Calu3 (cell line): ENCODE measurements at regions of chr20 and their contacts with region 1.

Region 1: DNA sequence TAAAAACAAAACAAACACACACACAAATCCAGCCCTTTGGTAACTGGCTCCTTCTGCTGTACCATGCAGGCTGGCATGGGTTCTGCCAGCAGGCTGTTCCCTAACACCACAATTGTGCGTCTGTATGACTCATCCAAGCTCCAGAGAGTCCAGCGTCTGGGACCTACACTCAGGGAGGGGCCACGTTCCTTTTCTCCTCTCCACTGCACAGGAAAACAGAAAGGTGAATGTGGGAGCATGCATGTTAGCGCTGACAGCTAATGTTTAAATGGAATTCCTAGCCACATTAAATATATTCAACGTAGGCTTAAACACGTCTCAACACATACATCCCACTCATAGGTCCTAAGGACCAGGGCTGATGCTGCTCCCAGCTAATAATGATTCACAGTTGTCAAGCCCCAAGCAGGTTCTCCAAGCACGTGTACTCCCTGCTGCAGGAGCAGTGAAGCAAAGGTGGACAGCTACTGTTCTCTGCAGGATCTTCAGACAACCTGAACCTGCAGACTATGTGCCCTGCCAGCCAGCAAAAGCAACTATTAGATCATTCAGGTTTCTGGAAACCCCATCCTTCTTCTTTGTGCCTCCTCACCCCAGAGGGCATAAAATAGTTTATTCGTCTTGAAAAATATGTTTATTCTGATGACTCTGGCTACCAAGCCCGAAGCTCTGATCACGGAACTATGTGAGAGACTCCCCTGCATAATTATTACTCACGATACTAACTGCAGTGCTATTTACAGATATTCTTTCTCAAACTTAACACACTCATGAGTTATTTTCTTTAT is 20.9 kb downstream of the MAP1LC3A start:
- DNase-seq: peak; percentile 71
- H3K4me3 Mint-ChIP-seq: no peak overlapping the region
- H3K27ac Mint-ChIP-seq: no peak overlapping the region
- H3K4me1 Mint-ChIP-seq: peaks cover 17% of the 10 kb centered on the region
- H3K27me3 Mint-ChIP-seq: no peaks in the 10 kb centered on the region
- CTCF ChIP-seq: peak; percentile 64

Region 2: GRCh38 chr20:34615477-34615876 is 36.1 kb after region 1 on chr20:
- CTCF ChIA-PET with region 1: no interaction called
- intact Hi-C with region 1: no loop called
- DNase-seq: no peak
- H3K4me3 Mint-ChIP-seq: no peak overlapping the region
- H3K27ac Mint-ChIP-seq: no peak overlapping the region
- H3K4me1 Mint-ChIP-seq: no peaks in the 10 kb centered on the region
- H3K27me3 Mint-ChIP-seq: no peaks in the 10 kb centered on the region
- CTCF ChIP-seq: no peak

Region 3: DNA sequence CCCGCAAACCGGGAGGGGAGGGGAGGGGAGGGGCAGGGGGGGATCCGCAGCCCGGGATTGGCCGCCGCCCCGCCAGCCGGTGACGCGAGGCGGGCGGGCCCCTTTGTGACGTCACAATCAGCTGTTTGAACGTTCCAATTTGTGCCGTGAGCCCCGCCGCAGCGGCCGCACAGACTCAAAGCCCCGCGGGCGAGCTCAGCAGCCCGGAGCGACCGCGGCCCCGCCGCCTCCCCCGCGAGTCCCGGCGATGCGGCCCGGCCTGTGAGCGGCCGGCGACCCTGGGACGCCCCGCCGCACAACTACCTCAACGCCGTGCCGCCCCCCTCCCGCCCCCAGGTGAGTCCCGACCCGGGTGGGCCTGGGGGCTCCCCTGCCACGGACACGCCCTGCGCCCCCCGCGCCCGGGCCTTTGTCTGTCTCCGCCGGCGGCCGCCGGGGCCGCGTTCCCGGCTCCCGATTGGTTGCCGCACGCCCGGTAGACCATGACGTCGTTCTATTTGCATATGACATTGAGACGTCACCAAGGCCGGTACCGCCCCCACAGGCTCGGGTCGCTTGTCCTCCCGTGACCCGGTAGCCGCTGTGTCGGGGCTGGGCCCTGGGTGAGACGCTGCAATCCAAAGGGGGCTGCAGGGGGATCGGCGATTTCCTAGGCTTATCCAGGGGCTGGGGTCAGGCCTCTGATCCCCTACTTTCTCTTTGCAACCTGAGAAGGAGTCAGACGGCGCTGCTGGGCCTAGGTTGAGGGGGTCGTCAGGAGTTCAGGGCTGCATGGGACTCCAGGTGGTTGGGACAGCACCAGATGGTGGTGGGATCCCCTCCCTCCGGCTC is 125.0 kb after region 1 on chr20 and contains the start of gene TP53INP2:
- CTCF ChIA-PET with region 1: interaction called, 19 read pairs
- intact Hi-C with region 1: loop called (anchors 1 kb)
- DNase-seq: peak; percentile 91
- H3K4me3 Mint-ChIP-seq: peak within 1 kb of the TSS; percentile 90
- H3K27ac Mint-ChIP-seq: peak within 1 kb of the TSS; percentile 97
- H3K4me1 Mint-ChIP-seq: peaks cover 26% of the 10 kb centered on the region
- H3K27me3 Mint-ChIP-seq: peaks cover 30% of the 10 kb centered on the region
- CTCF ChIP-seq: no peak
- total RNA-seq, gene TP53INP2: 5.0 and 5.2 TPM in 2 replicates

Region 4: DNA sequence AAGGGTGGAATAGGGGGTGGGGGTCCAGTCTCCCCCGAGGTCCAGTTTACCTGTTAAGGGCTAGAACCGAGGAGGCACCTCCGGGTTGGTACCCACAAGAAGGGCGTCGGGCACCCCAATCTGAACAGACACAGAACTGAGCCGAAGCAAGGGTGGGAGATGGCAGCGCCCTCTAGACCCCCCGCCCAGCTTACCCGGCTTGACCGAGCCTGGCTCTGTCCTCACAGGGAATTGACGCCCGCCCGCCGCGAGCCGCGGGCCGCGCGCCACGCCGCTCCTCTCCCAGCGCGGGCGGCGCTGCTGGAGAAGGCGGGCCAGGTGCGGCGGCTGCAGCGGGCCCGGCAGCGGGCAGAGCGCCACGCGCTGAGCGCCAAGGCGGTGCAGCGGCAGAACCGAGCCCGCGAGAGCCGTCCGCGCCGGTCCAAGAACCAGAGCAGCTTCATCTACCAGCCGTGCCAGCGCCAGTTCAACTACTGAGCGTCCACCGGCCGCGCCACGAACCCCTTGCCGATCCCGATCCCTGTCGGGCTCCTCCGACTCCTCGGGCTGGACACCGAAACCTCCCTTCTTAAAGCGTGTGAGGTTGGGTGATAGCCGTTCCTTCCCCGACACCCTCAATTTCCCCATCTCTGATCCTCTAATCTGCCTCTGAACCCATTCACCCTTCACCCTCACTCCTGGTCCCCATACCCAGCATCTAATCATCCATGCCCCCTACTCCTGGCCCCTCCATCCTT is 130.6 kb after region 1 on chr20:
- CTCF ChIA-PET with region 1: interaction called, 19 read pairs
- intact Hi-C with region 1: loop called (anchors 1 kb)
- DNase-seq: peak; percentile 67
- H3K4me3 Mint-ChIP-seq: peak overlapping the region; percentile 87
- H3K27ac Mint-ChIP-seq: peak overlapping the region; percentile 72
- H3K4me1 Mint-ChIP-seq: peaks cover 43% of the 10 kb centered on the region
- H3K27me3 Mint-ChIP-seq: peaks cover 17% of the 10 kb centered on the region
- CTCF ChIP-seq: peak; percentile 30

Region 5: DNA sequence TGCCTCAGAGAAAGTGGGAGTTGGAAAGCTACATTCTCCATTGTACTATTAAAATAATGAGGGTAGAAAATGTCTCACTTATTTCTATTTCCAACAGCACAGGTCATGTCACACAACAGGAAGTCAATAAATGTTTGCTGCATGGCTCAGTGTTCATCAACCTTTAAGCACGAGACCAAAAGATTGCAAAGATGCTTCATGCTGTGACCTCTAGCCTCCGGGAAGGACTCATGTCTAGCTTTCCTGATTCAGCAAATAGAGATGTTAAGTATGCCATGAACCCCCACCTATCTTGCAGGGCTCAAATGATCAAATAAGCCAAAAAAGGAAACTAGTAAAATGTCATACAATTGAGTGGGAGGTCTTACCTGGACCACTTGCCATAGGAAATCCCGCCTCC is 188.7 kb after region 1 on chr20:
- CTCF ChIA-PET with region 1: interaction called, 34 read pairs
- intact Hi-C with region 1: loop called (anchors 1 kb)
- DNase-seq: no peak
- H3K4me3 Mint-ChIP-seq: no peak overlapping the region
- H3K27ac Mint-ChIP-seq: no peak overlapping the region
- H3K4me1 Mint-ChIP-seq: peaks cover 5% of the 10 kb centered on the region
- H3K27me3 Mint-ChIP-seq: no peaks in the 10 kb centered on the region
- CTCF ChIP-seq: no peak

Region 6: GRCh38 chr20:34773726-34774125 is 194.3 kb after region 1 on chr20:
- CTCF ChIA-PET with region 1: interaction called, 34 read pairs
- intact Hi-C with region 1: loop called (anchors 1 kb)
- DNase-seq: no peak
- H3K4me3 Mint-ChIP-seq: no peak overlapping the region
- H3K27ac Mint-ChIP-seq: no peak overlapping the region
- H3K4me1 Mint-ChIP-seq: no peaks in the 10 kb centered on the region
- H3K27me3 Mint-ChIP-seq: no peaks in the 10 kb centered on the region
- CTCF ChIP-seq: no peak